K562 (cell line): ENCODE measurements at regions of chr5 and their contacts with region 1.

Region 1: DNA sequence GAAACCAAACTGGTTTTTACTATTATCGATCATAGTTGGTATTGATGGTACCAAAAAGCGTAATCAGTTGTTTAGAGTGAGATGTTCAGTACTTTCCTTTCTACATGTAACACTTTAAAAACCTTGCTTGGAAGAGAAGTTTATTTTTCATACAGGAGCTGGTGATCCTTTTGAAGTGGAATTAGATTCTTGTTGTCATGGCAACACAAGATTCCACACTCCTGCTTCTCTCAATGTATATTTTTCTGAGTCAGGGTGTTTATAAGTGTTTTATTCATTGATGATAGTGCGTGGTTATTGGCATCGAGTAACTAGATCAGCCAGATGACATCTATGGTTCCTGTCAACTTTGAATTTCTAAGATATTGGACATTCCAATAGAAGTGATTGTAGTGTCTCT is 181.1 kb upstream of the CHD1 start:
- DNase-seq: no peak
- ATAC-seq: no peak
- H3K4me3 ChIP-seq: no peak overlapping the region
- H3K27ac ChIP-seq: no peak overlapping the region
- H3K4me1 ChIP-seq: no peaks in the 10 kb centered on the region
- H3K27me3 ChIP-seq: no peaks in the 10 kb centered on the region
- CTCF ChIP-seq: no peak
- EP300 ChIP-seq: no peak
- POLR2A ChIP-seq: no peak
- RAD21 ChIP-seq: no peak

Region 2: DNA sequence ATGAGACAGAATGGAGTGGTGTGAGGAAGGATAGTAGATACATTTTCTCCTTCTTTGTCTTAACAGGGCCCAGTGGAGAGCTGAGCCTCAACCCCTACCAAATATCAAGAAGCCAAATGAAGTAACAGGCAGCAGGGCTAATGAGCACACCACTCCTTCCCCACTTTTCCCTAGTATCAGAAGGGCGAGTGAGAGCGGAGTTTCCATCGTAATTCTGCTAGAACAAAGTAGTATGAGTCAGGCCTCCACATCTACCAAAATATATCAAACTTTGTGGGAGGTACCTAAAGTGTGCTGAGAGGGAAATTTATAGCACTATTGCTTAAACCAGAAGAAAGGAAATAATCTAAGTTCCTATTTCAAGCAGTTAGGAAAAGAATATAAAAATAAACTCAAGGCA is 1105.4 kb before region 1 on chr5:
- CTCF ChIA-PET with region 1: no interaction called
- POLR2A ChIA-PET with region 1: no interaction called
- in situ Hi-C with region 1: no loop called
- intact Hi-C with region 1: no loop called
- DNase-seq: no peak
- ATAC-seq: no peak
- H3K4me3 ChIP-seq: no peak overlapping the region
- H3K27ac ChIP-seq: no peak overlapping the region
- H3K4me1 ChIP-seq: no peaks in the 10 kb centered on the region
- H3K27me3 ChIP-seq: no peaks in the 10 kb centered on the region
- CTCF ChIP-seq: no peak
- EP300 ChIP-seq: no peak
- POLR2A ChIP-seq: no peak
- RAD21 ChIP-seq: no peak

Region 3: DNA sequence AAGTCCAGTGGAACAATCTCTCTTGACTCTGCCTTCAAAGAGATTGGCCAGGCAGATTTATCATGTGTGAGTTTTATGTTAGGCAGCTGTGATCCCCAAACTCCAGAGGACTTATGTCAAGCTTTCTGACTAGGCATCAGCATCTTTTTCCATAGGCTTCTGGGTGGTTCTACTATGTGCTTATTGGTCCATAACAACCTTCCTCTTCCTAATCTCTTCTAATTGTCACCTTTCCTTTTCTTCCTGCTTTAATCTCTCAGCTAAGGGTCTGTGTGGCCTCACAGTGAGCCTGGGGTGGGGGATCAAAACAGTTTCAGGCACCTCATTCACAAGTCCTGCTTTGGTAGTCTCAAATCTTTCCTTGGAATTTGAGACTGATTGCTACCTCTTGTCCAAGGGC is 10.2 kb before region 1 on chr5:
- CTCF ChIA-PET with region 1: no interaction called
- POLR2A ChIA-PET with region 1: no interaction called
- in situ Hi-C with region 1: no loop called
- intact Hi-C with region 1: loop called (anchors 1 kb)
- DNase-seq: no peak
- ATAC-seq: no peak
- H3K4me3 ChIP-seq: no peak overlapping the region
- H3K27ac ChIP-seq: no peak overlapping the region
- H3K4me1 ChIP-seq: no peaks in the 10 kb centered on the region
- H3K27me3 ChIP-seq: no peaks in the 10 kb centered on the region
- CTCF ChIP-seq: no peak
- EP300 ChIP-seq: no peak
- POLR2A ChIP-seq: no peak
- RAD21 ChIP-seq: no peak

Region 4: DNA sequence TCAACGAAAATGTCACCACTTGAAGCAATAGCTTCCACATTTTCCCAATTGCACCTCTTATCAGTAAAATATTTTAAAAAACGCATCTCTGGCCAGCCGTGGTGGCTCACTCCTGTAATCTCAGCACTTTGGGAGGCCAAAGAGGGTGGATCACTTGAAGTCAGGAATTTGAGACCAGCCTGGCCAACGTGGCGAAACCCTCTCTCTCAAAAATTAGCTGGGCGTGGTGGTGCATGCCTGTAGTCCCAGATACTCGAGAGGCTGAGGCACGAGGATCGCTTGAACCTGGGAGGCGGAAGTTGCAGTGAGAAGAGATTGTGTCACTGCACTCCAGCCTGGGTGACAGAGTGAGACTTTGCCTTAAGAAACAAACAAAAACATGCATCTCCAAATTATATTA is 29.0 kb after region 1 on chr5:
- CTCF ChIA-PET with region 1: no interaction called
- POLR2A ChIA-PET with region 1: no interaction called
- in situ Hi-C with region 1: no loop called
- intact Hi-C with region 1: no loop called
- DNase-seq: no peak
- ATAC-seq: no peak
- H3K4me3 ChIP-seq: no peak overlapping the region
- H3K27ac ChIP-seq: no peak overlapping the region
- H3K4me1 ChIP-seq: no peaks in the 10 kb centered on the region
- H3K27me3 ChIP-seq: no peaks in the 10 kb centered on the region
- CTCF ChIP-seq: no peak
- EP300 ChIP-seq: no peak
- POLR2A ChIP-seq: no peak
- RAD21 ChIP-seq: no peak

Region 5: DNA sequence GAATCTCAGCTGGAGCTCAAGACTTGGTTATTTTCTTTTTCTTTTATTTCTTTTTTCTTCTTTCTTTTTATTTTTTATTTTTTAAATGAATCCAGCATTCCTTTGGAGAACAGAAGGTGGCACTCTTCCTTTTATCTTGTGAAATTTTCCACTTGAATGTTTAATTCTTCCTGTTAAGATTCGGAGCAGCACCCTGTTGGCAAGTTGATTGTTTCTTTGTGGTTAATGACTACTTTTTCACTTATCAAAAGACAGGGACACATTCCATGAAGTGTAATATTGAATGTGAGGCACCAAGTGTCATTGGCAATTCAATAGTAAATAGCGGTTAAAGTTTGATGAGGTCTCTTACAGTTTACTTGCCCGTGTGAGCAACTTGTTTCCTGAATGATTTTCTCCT is 59.4 kb after region 1 on chr5:
- CTCF ChIA-PET with region 1: no interaction called
- POLR2A ChIA-PET with region 1: no interaction called
- in situ Hi-C with region 1: no loop called
- intact Hi-C with region 1: no loop called
- DNase-seq: no peak
- ATAC-seq: no peak
- H3K4me3 ChIP-seq: no peak overlapping the region
- H3K27ac ChIP-seq: no peak overlapping the region
- H3K4me1 ChIP-seq: no peaks in the 10 kb centered on the region
- H3K27me3 ChIP-seq: no peaks in the 10 kb centered on the region
- CTCF ChIP-seq: peak in 2 of 3 experiments; percentile 16 to 33; a peak in 1 of 6 replicates
- EP300 ChIP-seq: no peak
- POLR2A ChIP-seq: no peak
- RAD21 ChIP-seq: peak in 1 of 2 experiments; percentile 32; a peak in 1 of 4 replicates